Breast epithelium (tissue), 4 donors: ENCODE measurements at regions of chrX and their contacts with region 1.

Region 1: DNA sequence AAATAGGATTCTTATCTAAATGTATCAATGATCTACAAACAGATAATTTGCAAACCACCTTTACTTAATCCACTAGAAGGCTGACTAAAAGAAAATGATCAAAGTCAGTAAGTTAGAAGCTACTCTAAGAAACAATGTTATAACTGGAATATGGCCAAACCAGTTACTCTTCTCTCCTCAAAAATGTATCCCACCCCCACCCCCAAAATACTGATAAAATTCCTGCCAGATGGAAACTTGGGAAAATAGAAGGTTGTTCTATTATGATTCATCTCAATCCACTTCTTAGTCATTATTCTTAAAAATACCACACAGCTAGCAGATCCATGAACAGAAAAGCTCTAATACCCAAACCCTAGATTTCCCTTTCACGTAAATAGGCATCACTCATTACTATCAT is 206.4 kb downstream of the KLHL13 start:
- DNase-seq: no peak
- H3K4me3 ChIP-seq: no peak overlapping the region
- H3K27ac ChIP-seq: no peak overlapping the region
- H3K4me1 ChIP-seq: no peaks in the 10 kb centered on the region
- H3K27me3 ChIP-seq: no peaks in the 10 kb centered on the region
- CTCF ChIP-seq: no peak
- POLR2A ChIP-seq: no peak

Region 2: DNA sequence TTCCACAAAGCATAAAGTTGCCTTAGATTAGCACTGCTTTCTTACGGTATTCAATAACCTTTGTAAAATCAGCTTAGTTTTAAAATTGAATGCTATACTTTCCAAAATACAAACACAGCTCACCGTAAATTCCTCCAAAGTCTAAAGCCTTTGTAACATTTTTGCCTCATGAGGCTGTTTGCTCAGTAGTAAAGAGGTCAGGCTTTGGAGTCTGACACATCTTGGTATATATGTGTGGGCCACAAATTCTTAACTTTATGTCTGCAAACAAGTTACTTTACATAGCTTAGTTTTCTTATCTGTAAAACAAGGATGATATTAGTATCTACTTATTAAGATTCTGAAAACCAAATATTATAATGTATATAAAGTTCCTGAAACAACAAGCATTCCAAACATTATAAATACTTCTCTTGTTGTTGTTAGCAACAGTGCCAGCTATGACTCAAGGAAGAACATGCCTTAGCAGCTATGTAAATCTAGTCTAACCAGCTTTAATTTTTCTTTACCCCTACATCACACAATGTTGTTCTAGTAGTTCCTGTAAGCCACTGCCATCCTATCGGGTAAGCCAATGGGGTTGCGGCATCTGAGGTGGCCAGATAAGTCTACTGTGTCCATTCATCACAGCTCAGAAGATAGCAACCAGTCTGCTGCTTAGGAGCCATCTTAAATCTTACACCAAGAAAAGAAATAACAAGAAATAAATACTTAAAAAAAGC is 502.6 kb before region 1 on chrX:
- intact Hi-C with region 1: no loop called
- DNase-seq: no peak
- H3K4me3 ChIP-seq: no peak overlapping the region
- H3K27ac ChIP-seq: no peak overlapping the region
- H3K4me1 ChIP-seq: no peaks in the 10 kb centered on the region
- H3K27me3 ChIP-seq: no peaks in the 10 kb centered on the region
- CTCF ChIP-seq: no peak
- POLR2A ChIP-seq: no peak

Region 3: DNA sequence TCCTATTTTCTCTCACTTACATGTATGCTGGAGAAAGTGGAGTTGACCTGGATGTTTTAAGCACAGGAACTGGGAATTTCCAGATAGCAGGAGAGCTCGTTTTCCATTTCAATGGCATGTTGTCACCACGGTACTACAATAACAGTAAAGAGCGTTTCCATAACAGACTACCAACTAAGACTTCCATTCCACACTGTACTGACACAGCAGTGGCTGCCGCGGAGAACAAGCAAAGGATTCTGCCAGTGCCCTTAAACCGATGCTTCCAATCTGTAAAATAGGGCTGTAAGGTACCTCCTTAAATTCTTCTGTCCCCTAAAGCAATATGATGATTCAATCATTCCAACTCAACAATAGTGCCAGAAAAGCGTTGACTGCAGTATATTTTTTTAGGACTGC is 62.5 kb after region 1 on chrX:
- intact Hi-C with region 1: loop called (anchors 2 kb)
- DNase-seq: no peak
- H3K4me3 ChIP-seq: peak overlapping the region in 2 of 3 donors; percentile 6 to 9
- H3K27ac ChIP-seq: peak overlapping the region in 1 of 2 donors; percentile 14
- H3K4me1 ChIP-seq: no peaks in the 10 kb centered on the region
- H3K27me3 ChIP-seq: no peaks in the 10 kb centered on the region
- CTCF ChIP-seq: no peak
- POLR2A ChIP-seq: no peak